B cell (primary cell): ENCODE measurements at regions of chr12 and their contacts with region 1.

Region 1: GRCh38 chr12:123468562-123469185 is 10.7 kb downstream of the SNRNP35 start:
- DNase-seq: peak; percentile 76
- ATAC-seq: peak; percentile 97
- H3K4me3 ChIP-seq: no peak overlapping the region
- H3K4me3 Mint-ChIP-seq: no peak overlapping the region
- H3K27ac ChIP-seq: no peak overlapping the region
- H3K27ac Mint-ChIP-seq: peak overlapping the region; percentile 56
- H3K4me1 ChIP-seq: peaks cover 3 to 9% of the 10 kb centered on the region in 2 donors
- H3K4me1 Mint-ChIP-seq: peaks cover 12% of the 10 kb centered on the region
- H3K27me3 ChIP-seq: no peaks in the 10 kb centered on the region
- H3K27me3 Mint-ChIP-seq: no peaks in the 10 kb centered on the region
- CTCF ChIP-seq: peak; percentile 77

Region 2: DNA sequence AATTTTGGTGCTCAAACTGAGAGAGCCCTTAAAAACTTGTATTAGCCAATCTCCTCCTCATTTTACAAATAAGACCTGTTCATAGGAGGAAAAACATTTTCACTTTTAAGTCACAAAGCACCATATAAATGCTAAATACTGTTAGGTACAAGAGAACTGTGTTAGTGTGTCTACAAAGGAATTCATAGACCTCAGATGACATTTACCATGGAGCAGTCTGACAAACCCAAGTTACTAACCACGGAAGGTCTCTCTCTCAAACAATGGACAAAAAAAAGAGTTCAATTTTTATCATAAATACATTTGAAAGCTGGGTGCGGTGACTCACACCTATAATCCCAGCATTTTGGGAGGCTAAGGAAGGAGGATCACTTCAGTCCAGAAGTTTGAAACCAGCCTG is 114.1 kb before region 1 on chr12:
- CTCF ChIA-PET with region 1: interaction called, 9 read pairs
- POLR2A ChIA-PET with region 1: no interaction called
- intact Hi-C with region 1: loop called (anchors 5 kb)
- DNase-seq: no peak
- ATAC-seq: no peak
- H3K4me3 ChIP-seq: no peak overlapping the region
- H3K4me3 Mint-ChIP-seq: no peak overlapping the region
- H3K27ac ChIP-seq: no peak overlapping the region
- H3K27ac Mint-ChIP-seq: no peak overlapping the region
- H3K4me1 ChIP-seq: no peaks in the 10 kb centered on the region
- H3K4me1 Mint-ChIP-seq: peaks cover 37% of the 10 kb centered on the region
- H3K27me3 ChIP-seq: no peaks in the 10 kb centered on the region
- H3K27me3 Mint-ChIP-seq: no peaks in the 10 kb centered on the region
- CTCF ChIP-seq: no peak

Region 3: GRCh38 chr12:123398177-123398549 is 70.5 kb before region 1 on chr12:
- CTCF ChIA-PET with region 1: interaction called, 6 read pairs
- POLR2A ChIA-PET with region 1: interaction called, 10 read pairs
- intact Hi-C with region 1: no loop called
- DNase-seq: no peak
- ATAC-seq: no peak
- H3K4me3 ChIP-seq: no peak overlapping the region
- H3K4me3 Mint-ChIP-seq: no peak overlapping the region
- H3K27ac ChIP-seq: no peak overlapping the region
- H3K27ac Mint-ChIP-seq: no peak overlapping the region
- H3K4me1 ChIP-seq: no peaks in the 10 kb centered on the region
- H3K4me1 Mint-ChIP-seq: peaks cover 3% of the 10 kb centered on the region
- H3K27me3 ChIP-seq: no peaks in the 10 kb centered on the region
- H3K27me3 Mint-ChIP-seq: no peaks in the 10 kb centered on the region
- CTCF ChIP-seq: no peak

Region 4: DNA sequence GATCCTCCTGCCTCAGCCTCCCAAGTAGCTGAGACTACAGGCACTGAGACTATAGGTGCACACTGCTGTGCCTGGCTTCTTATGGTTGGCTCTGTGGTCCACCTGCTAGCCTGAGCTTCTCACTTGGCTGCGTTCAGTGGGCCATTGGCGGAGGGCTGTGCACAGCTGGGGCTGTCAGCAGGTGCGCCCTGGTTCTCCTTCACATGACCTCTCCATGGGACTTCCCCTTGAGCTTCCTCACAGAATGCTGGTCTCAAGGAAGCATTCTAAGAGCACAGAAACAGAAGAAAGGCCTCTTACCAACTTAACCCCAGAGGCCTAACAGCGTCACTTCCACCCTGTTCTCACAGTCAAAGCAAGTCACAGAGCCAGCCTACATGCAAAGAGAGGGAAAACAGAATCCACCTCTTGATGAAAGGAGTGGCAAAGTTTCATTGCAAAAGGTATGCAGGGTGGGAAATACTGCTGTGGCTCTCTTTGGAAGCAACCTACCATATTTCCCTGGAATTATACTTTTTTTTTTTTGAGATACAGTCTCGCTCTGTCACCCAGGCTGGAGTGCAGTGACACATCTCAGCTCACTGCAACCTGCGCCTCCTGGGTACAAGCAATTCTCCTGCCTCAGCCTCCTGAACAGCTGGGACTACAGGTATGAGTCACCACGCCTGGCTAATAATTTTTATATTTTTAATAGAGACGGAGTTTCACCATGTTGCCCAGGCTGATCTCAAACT is 41.5 kb before region 1 on chr12:
- CTCF ChIA-PET with region 1: interaction called, 15 read pairs
- POLR2A ChIA-PET with region 1: interaction called, 6 read pairs
- intact Hi-C with region 1: loop called (anchors 1 kb)
- DNase-seq: peak; percentile 94
- ATAC-seq: peak; percentile 95
- H3K4me3 ChIP-seq: no peak overlapping the region
- H3K4me3 Mint-ChIP-seq: peak overlapping the region; percentile 74
- H3K27ac ChIP-seq: peak overlapping the region; percentile 67 to 76
- H3K27ac Mint-ChIP-seq: peak overlapping the region; percentile 95
- H3K4me1 ChIP-seq: peaks cover 23 to 29% of the 10 kb centered on the region in 2 donors
- H3K4me1 Mint-ChIP-seq: peaks cover 36% of the 10 kb centered on the region
- H3K27me3 ChIP-seq: no peaks in the 10 kb centered on the region
- H3K27me3 Mint-ChIP-seq: no peaks in the 10 kb centered on the region
- CTCF ChIP-seq: no peak